B cell (primary cell): ENCODE measurements at regions of chr2 and their contacts with region 1.

Region 1: DNA sequence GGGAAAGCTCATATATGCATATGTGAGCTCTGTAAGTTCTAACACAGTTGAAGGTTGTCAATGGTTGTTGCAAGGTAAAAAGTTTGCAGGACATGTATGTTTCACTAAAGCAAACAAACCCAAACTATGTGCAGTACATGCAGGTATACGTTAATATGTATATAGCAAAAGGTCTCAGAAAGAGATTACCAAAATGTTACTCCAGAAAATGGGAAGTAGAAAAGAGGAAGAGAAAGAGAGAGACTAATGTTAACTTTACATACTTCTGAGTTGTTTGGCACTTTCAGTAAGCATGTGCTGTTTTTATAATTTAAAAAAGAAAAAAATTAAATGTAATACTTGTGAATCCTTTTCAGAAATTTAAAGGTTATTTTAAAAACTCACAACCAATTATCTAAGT is 32.8 kb upstream of the PEX13 start:
- DNase-seq: peak; percentile 69
- ATAC-seq: peak; percentile 78
- H3K4me3 ChIP-seq: peak overlapping the region in 1 of 5 experiments; percentile 48
- H3K4me3 Mint-ChIP-seq: peak overlapping the region; percentile 75
- H3K27ac ChIP-seq: peak overlapping the region in 1 of 2 donors; percentile 56
- H3K27ac Mint-ChIP-seq: peak overlapping the region; percentile 62
- H3K4me1 ChIP-seq: peaks cover 41 to 45% of the 10 kb centered on the region in 2 donors
- H3K4me1 Mint-ChIP-seq: peaks cover 45% of the 10 kb centered on the region
- H3K27me3 ChIP-seq: no peaks in the 10 kb centered on the region
- H3K27me3 Mint-ChIP-seq: no peaks in the 10 kb centered on the region
- CTCF ChIP-seq: no peak

Region 2: GRCh38 chr2:60621688-60622429 is 362.9 kb before region 1 on chr2:
- CTCF ChIA-PET with region 1: no interaction called
- POLR2A ChIA-PET with region 1: no interaction called
- intact Hi-C with region 1: no loop called
- DNase-seq: no peak
- ATAC-seq: no peak
- H3K4me3 ChIP-seq: no peak overlapping the region
- H3K4me3 Mint-ChIP-seq: no peak overlapping the region
- H3K27ac ChIP-seq: no peak overlapping the region
- H3K27ac Mint-ChIP-seq: no peak overlapping the region
- H3K4me1 ChIP-seq: no peaks in the 10 kb centered on the region
- H3K4me1 Mint-ChIP-seq: no peaks in the 10 kb centered on the region
- H3K27me3 ChIP-seq: peaks cover 0 to 4% (median 0%) of the 10 kb centered on the region in 4 experiments
- H3K27me3 Mint-ChIP-seq: peaks cover 33% of the 10 kb centered on the region
- CTCF ChIP-seq: no peak

Region 3: GRCh38 chr2:60966507-60967405 is 18.0 kb before region 1 on chr2:
- CTCF ChIA-PET with region 1: interaction called, 4 read pairs
- POLR2A ChIA-PET with region 1: interaction called, 11 read pairs
- intact Hi-C with region 1: no loop called
- DNase-seq: peak; percentile 65
- ATAC-seq: peak; percentile 54
- H3K4me3 ChIP-seq: peak overlapping the region in 4 of 5 experiments; percentile 13 to 52 (median 40)
- H3K4me3 Mint-ChIP-seq: peak overlapping the region; percentile 85
- H3K27ac ChIP-seq: peak overlapping the region; percentile 82 to 85
- H3K27ac Mint-ChIP-seq: peak overlapping the region; percentile 92
- H3K4me1 ChIP-seq: peaks cover 59 to 66% of the 10 kb centered on the region in 2 donors
- H3K4me1 Mint-ChIP-seq: peaks cover 73% of the 10 kb centered on the region
- H3K27me3 ChIP-seq: no peaks in the 10 kb centered on the region
- H3K27me3 Mint-ChIP-seq: no peaks in the 10 kb centered on the region
- CTCF ChIP-seq: no peak

Region 4: DNA sequence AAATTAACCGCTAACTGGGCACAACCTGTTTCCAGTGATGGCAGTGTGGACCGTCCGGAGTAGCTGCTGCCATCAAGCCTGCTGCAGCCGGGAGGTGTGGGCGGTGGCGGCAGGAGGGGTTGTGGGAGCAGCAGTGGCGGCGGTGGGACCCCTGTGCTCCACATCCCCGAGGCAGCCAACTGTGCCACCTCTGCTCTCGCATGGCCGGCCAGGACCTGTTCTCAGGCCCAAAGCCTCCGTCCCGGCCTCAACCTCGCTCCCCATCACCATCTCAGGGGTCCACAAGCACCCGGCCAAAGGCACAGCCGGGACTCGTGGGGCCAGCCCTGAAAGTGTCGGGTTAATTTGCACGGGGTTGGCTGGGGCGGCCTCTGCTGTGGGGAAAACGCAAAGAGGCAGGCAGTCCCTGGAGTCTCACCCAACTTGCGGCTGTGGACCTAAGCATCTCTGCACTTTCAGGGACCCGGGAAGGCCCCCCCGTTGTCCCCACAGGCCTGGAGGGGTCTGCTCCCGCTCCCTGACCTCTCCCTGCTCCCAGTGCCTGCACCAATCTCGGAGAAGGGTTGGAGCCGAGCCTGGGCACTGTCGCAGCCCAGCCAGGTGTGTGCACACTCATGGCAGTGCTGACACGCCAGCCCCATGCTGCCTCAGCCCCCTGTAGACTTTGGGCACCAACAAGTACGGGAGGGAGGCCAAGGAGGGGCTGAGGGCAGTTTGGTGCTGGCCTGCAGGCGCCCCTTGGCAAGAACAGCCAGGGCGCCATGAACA is 11.6 kb before region 1 on chr2:
- CTCF ChIA-PET with region 1: interaction called, 4 read pairs
- POLR2A ChIA-PET with region 1: interaction called, 11 read pairs
- intact Hi-C with region 1: loop called (anchors 1 kb)
- DNase-seq: no peak
- ATAC-seq: peak; percentile 2
- H3K4me3 ChIP-seq: peak overlapping the region in 2 of 5 experiments; percentile 7 to 8
- H3K4me3 Mint-ChIP-seq: peak overlapping the region; percentile 82
- H3K27ac ChIP-seq: peak overlapping the region; percentile 77 to 85
- H3K27ac Mint-ChIP-seq: peak overlapping the region; percentile 96
- H3K4me1 ChIP-seq: peaks cover 41 to 58% of the 10 kb centered on the region in 2 donors
- H3K4me1 Mint-ChIP-seq: peaks cover 74% of the 10 kb centered on the region
- H3K27me3 ChIP-seq: no peaks in the 10 kb centered on the region
- H3K27me3 Mint-ChIP-seq: no peaks in the 10 kb centered on the region
- CTCF ChIP-seq: no peak

Region 5: DNA sequence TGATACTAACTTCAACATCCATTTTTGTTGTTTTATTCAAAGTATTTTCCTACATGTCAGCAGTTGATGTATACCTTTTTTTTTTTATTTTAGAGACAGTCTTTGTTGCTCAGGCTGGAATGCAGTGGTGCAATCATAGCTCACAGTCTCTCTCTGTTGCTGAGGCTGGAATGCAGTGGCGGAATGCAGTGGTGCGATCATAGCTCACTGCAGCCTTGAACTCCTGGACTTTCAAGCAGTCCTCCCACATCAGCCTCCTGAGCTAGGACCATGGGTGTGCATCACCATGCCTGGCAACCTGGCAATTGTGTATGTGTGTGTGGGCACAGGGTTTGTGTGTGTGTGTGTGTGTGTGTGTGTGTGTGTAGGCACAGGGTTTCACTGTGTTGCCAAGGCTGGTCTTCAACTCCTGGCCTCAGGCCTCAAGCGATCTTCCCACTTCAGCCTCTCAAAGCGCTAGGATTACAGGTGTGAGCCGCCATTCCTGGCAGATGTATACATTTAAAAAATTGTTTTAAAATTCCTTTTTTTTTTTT is 105.7 kb after region 1 on chr2:
- CTCF ChIA-PET with region 1: no interaction called
- POLR2A ChIA-PET with region 1: no interaction called
- intact Hi-C with region 1: no loop called
- DNase-seq: no peak
- ATAC-seq: no peak
- H3K4me3 ChIP-seq: no peak overlapping the region
- H3K4me3 Mint-ChIP-seq: no peak overlapping the region
- H3K27ac ChIP-seq: no peak overlapping the region
- H3K27ac Mint-ChIP-seq: no peak overlapping the region
- H3K4me1 ChIP-seq: no peaks in the 10 kb centered on the region
- H3K4me1 Mint-ChIP-seq: no peaks in the 10 kb centered on the region
- H3K27me3 ChIP-seq: no peaks in the 10 kb centered on the region
- H3K27me3 Mint-ChIP-seq: no peaks in the 10 kb centered on the region
- CTCF ChIP-seq: no peak

Region 6: DNA sequence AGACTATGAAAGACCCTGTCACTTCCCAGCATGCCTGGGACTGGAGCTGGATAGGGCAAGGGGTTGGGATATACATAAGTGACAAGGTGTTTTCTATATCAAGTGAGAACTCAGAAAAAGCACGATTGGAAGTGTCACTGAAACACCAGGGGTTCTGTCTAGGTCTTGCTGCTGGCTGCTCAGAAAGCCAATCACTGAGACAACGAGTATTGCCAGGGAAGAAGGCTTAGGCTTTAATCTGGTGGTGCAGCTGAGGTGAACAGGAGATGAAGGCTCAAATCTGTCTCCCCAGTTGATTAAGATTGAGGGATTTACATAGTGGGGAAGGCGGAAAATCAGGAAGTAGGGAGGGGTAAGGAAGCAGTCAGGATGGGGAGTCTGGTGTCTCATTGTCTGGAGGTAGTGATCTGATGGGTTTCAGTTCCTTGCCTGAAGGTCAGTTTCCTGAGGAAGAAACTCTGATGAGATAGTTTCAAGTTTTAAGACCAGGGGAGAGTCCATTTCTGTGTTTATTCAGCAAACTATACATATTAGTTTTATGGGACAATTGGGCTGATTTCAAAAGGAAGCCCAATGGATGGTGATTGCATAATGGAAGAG is 173.7 kb after region 1 on chr2:
- CTCF ChIA-PET with region 1: no interaction called
- POLR2A ChIA-PET with region 1: no interaction called
- intact Hi-C with region 1: no loop called
- DNase-seq: no peak
- ATAC-seq: no peak
- H3K4me3 ChIP-seq: no peak overlapping the region
- H3K4me3 Mint-ChIP-seq: no peak overlapping the region
- H3K27ac ChIP-seq: peak overlapping the region in 1 of 2 donors; percentile 59
- H3K27ac Mint-ChIP-seq: peak overlapping the region; percentile 51
- H3K4me1 ChIP-seq: peaks cover 6 to 8% of the 10 kb centered on the region in 2 donors
- H3K4me1 Mint-ChIP-seq: peaks cover 11% of the 10 kb centered on the region
- H3K27me3 ChIP-seq: no peaks in the 10 kb centered on the region
- H3K27me3 Mint-ChIP-seq: no peaks in the 10 kb centered on the region
- CTCF ChIP-seq: no peak